Endothelial cell of umbilical vein (primary cell): ENCODE measurements at regions of chr1 and their contacts with region 1.

Region 1: GRCh38 chr1:56137521-56138505 is 441.6 kb downstream of the PLPP3 start:
- DNase-seq: peak; percentile 93
- H3K4me3 ChIP-seq: no peak overlapping the region
- H3K27ac ChIP-seq: peak overlapping the region; percentile 72
- H3K4me1 ChIP-seq: peaks cover 20% of the 10 kb centered on the region
- H3K27me3 ChIP-seq: no peaks in the 10 kb centered on the region
- CTCF ChIP-seq: no peak
- POLR2A ChIP-seq: no peak

Region 2: GRCh38 chr1:56106531-56107275 is 31.1 kb before region 1 on chr1:
- CTCF ChIA-PET with region 1: no interaction called
- POLR2A ChIA-PET with region 1: no interaction called
- dilution Hi-C with region 1: no loop called
- intact Hi-C with region 1: no loop called
- DNase-seq: no peak
- H3K4me3 ChIP-seq: no peak overlapping the region
- H3K27ac ChIP-seq: no peak overlapping the region
- H3K4me1 ChIP-seq: no peaks in the 10 kb centered on the region
- H3K27me3 ChIP-seq: no peaks in the 10 kb centered on the region
- CTCF ChIP-seq: no peak
- POLR2A ChIP-seq: no peak

Region 3: GRCh38 chr1:56148326-56149193 is 10.7 kb after region 1 on chr1:
- CTCF ChIA-PET with region 1: interaction called, 6 read pairs
- POLR2A ChIA-PET with region 1: no interaction called
- dilution Hi-C with region 1: no loop called
- intact Hi-C with region 1: loop called (anchors 1 kb)
- DNase-seq: peak; percentile 75
- H3K4me3 ChIP-seq: no peak overlapping the region
- H3K27ac ChIP-seq: no peak overlapping the region
- H3K4me1 ChIP-seq: peaks cover 20% of the 10 kb centered on the region
- H3K27me3 ChIP-seq: no peaks in the 10 kb centered on the region
- CTCF ChIP-seq: peak in 1 of 2 donors; percentile 27
- POLR2A ChIP-seq: no peak

Region 4: GRCh38 chr1:56200442-56200841 is 62.6 kb after region 1 on chr1:
- CTCF ChIA-PET with region 1: no interaction called
- POLR2A ChIA-PET with region 1: no interaction called
- dilution Hi-C with region 1: no loop called
- intact Hi-C with region 1: no loop called
- DNase-seq: no peak
- H3K4me3 ChIP-seq: no peak overlapping the region
- H3K27ac ChIP-seq: no peak overlapping the region
- H3K4me1 ChIP-seq: no peaks in the 10 kb centered on the region
- H3K27me3 ChIP-seq: no peaks in the 10 kb centered on the region
- CTCF ChIP-seq: no peak
- POLR2A ChIP-seq: no peak

Region 5: GRCh38 chr1:56411484-56412180 is 273.8 kb after region 1 on chr1:
- CTCF ChIA-PET with region 1: interaction called, 3 read pairs
- POLR2A ChIA-PET with region 1: no interaction called
- dilution Hi-C with region 1: no loop called
- intact Hi-C with region 1: loop called (anchors 1 kb)
- DNase-seq: peak; percentile 95
- H3K4me3 ChIP-seq: no peak overlapping the region
- H3K27ac ChIP-seq: peak overlapping the region; percentile 49
- H3K4me1 ChIP-seq: peaks cover 19% of the 10 kb centered on the region
- H3K27me3 ChIP-seq: no peaks in the 10 kb centered on the region
- CTCF ChIP-seq: peak; percentile 38 to 60
- POLR2A ChIP-seq: no peak